Activated naive CD4-positive, alpha-beta T cell treated with anti-CD3 and anti-CD28 coated beads for 36 hours (primary cell): ENCODE measurements at regions of chr6 and their contacts with region 1.

Region 1: DNA sequence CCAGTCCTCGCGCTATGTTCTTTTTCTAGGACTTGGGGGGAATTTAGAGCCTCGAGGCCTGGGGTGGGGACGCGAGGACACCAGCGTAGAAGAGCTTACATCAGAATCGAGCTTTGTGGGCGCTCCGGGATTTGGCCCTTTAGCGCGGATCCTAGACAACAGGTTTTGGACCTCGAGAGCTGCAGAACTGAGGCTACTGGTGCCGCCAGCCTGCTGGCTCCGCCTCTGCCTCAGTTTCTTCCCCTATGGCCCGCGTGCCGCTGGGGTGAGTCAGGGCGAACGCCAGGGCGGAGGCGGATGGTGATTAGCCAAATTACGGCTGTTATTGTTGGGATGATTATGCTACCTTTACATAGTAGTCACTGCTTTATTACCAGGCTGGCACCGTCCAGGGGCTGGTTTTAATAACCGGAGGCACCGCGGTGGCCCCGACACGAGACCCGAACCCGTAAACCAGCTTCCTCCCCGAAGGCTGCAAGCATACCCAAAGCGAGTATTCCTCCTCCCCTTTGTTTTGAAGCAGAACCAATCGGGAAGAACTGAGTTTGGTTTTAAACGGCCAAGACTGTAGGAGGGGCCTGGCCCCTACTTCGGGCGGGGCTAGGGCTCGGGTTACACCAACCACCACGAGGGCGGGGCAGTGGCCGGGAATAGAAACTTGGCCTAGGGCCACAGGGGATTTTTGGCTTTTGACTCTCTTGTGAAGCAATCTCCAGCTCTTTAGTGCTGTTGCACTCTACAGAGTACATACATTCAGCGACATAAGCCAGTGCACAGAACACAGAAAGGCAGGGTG is 639 bp upstream of the GTPBP2 start:
- DNase-seq: peak; percentile 98
- H3K4me3 Mint-ChIP-seq: peak overlapping the region; percentile 98
- H3K27ac Mint-ChIP-seq: peak overlapping the region; percentile 99
- H3K4me1 Mint-ChIP-seq: peaks cover 33% of the 10 kb centered on the region
- H3K27me3 Mint-ChIP-seq: no peaks in the 10 kb centered on the region

Region 2: DNA sequence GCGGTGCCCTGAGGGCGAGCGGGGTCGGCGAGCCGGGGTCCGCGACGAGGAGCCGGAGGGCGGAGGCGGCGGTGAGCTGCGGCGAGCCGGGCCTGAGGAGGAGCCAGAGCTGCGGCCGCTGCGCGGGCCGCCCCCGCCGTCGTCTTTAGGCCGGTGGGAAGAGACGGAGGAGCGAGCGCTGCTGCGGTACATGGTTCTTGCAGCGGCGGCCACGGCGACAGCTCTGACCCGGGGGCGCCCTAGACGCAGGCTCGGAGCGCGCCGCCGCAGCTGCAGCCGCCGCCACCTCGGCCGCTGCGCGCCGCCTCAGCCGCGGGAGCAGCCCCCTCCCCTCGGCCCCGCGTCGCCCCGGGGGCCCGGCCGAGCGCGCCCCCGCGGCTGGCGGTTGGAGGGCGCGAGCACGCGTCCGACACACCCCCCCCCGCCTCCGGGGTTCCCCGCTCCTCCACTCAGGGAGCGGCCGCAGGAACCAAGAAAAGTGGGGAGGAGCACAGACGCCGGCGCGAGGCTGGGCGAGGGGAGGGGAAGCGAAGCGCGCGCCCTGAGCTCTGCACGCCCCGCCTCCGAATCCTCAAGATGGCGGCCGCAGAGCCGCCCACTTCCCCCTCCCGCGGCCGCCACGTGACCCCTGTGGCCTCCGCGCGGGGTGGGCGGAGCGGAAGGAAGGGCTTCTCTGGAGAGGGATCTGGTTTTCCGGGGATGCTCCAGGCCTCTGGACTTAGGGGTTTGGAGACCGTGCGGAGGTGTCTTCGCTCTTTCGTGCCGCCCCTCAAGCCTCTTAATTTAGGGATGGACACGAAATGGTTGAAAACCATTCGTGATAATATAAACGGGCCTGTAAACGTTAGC is 260.3 kb before region 1 on chr6 and contains the start of gene ZNF318:
- CTCF ChIA-PET with region 1: no interaction called
- intact Hi-C with region 1: loop called (anchors 5 kb)
- DNase-seq: peak; percentile 95
- H3K4me3 Mint-ChIP-seq: peak within 1 kb of the TSS; percentile 87
- H3K27ac Mint-ChIP-seq: peak within 1 kb of the TSS; percentile 90
- H3K4me1 Mint-ChIP-seq: peaks cover 36% of the 10 kb centered on the region
- H3K27me3 Mint-ChIP-seq: no peaks in the 10 kb centered on the region
- total RNA-seq, gene ZNF318: 9.3 to 9.9 TPM

Region 3: DNA sequence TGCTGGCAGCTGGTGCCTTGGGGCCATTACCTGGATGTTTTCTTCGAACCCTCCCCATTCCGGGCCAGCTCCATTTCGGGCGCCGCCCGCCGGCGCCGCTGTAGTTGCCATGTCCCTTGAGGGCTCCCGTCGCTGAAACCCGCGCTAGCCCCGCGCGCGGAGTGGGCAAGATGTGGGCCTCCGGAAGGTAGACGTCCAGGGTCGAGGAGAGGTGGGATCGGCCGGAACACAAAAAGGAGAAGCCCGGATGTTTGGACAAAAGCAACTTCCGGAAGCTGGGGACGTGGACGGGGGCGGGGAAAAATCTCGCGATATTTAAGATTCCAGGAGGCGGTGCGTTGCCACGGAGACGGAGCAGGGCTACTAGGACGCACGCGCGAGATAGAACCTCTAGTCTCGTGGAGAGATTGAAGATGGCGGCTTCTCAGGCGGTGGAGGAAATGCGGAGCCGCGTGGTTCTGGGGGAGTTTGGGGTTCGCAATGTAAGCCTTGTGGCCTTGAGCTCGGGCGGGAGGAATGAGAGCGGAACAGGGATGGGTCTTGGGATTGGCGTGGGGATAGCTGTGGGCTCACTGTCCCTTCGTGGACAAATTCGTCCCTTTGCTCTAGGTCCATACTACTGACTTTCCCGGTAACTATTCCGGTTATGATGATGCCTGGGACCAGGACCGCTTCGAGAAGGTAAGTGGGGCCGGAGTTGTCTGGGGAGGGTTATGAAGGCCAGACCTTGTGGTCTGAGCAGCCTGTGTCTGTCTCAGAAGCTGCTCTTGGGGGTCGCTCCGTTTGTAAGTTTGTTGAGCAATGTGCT is 112.8 kb before region 1 on chr6 and contains the starts of genes POLR1C and YIPF3:
- CTCF ChIA-PET with region 1: no interaction called
- intact Hi-C with region 1: loop called (anchors 1 kb)
- DNase-seq: peak; percentile 99
- H3K4me3 Mint-ChIP-seq: no peak within 1 kb of the TSS
- H3K27ac Mint-ChIP-seq: no peak within 1 kb of the TSS
- H3K4me1 Mint-ChIP-seq: peaks cover 28% of the 10 kb centered on the region
- H3K27me3 Mint-ChIP-seq: no peaks in the 10 kb centered on the region
- total RNA-seq, gene POLR1C: 47.5 to 50.1 TPM
- total RNA-seq, gene YIPF3: 26.2 to 26.5 TPM

Region 4: GRCh38 chr6:43575772-43576551 is 53.7 kb before region 1 on chr6 and contains the starts of genes POLH and XPO5:
- CTCF ChIA-PET with region 1: no interaction called
- intact Hi-C with region 1: loop called (anchors 1 kb)
- DNase-seq: peak; percentile 92
- H3K4me3 Mint-ChIP-seq: peak within 1 kb of the TSS; percentile 93
- H3K27ac Mint-ChIP-seq: peak within 1 kb of the TSS; percentile 87
- H3K4me1 Mint-ChIP-seq: peaks cover 48% of the 10 kb centered on the region
- H3K27me3 Mint-ChIP-seq: no peaks in the 10 kb centered on the region
- total RNA-seq, gene POLH: 63.3 to 68.6 TPM
- total RNA-seq, gene XPO5: 74.9 to 93.2 TPM

Region 5: GRCh38 chr6:43708860-43709653 is 79.4 kb after region 1 on chr6:
- CTCF ChIA-PET with region 1: no interaction called
- intact Hi-C with region 1: no loop called
- DNase-seq: no peak
- H3K4me3 Mint-ChIP-seq: no peak overlapping the region
- H3K27ac Mint-ChIP-seq: no peak overlapping the region
- H3K4me1 Mint-ChIP-seq: peaks cover 3% of the 10 kb centered on the region
- H3K27me3 Mint-ChIP-seq: peaks cover 10% of the 10 kb centered on the region

Region 6: DNA sequence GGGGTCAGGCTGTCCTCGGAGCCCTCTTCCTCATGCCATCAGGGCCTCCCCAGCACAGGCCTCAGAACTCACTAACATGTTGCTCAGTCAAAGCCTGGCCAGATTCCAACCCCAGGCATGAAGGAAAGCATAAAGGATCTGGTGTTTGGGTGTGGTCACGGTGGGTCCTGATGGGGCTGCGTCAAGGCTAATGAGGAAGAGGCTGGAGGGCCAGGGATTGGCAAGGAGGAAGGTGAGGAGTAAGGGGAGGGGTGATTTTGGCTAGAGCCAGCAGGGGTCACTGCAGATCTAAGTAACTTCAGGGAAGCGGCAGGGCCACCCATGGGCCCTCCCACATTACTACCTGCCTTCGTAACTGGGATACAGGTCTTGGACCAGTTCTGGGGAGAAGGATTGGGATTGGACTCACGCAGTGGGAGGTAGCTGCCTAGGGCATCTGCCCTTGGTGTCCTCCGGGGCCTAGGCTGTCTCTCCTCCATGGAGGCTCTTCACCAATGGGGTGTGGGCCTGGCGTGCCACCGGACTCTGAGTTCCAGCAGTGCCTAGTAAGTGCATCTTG is 94.1 kb after region 1 on chr6:
- CTCF ChIA-PET with region 1: no interaction called
- intact Hi-C with region 1: loop called (anchors 1 kb)
- DNase-seq: peak; percentile 90
- H3K4me3 Mint-ChIP-seq: peak overlapping the region; percentile 72
- H3K27ac Mint-ChIP-seq: no peak overlapping the region
- H3K4me1 Mint-ChIP-seq: peaks cover 23% of the 10 kb centered on the region
- H3K27me3 Mint-ChIP-seq: no peaks in the 10 kb centered on the region

Region 7: DNA sequence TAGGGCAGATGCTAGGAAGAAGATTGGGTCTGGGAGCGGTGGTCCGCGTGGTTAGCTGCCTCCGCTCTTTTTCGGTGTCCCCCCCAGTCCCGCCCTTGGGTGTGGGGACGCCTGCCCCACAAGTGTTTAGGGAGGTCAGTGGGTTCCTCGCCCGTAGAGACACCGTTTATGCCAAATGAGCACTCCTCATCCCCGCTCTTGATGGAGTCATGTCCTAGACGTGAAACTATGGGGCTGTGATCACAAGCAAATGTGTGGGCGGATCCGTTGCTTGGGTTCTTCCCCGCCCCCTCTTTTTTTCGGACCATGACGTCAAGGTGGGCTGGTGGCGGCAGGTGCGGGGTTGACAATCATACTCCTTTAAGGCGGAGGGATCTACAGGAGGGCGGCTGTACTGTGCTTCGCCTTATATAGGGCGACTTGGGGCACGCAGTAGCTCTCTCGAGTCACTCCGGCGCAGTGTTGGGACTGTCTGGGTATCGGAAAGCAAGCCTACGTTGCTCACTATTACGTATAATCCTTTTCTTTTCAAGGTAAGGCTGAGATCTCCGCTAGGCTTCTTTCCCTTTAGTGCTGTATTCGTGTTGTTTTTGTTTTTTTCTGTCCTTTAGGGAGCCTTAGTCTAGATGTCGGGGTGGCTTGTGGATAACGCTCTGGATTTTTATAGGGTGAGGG is 617.1 kb after region 1 on chr6 and contains the start of gene HSP90AB1:
- CTCF ChIA-PET with region 1: no interaction called
- intact Hi-C with region 1: loop called (anchors 1 kb)
- DNase-seq: peak; percentile 99
- H3K4me3 Mint-ChIP-seq: peak within 1 kb of the TSS; percentile 95
- H3K27ac Mint-ChIP-seq: peak within 1 kb of the TSS; percentile 97
- H3K4me1 Mint-ChIP-seq: peaks cover 46% of the 10 kb centered on the region
- H3K27me3 Mint-ChIP-seq: peaks cover 4% of the 10 kb centered on the region
- total RNA-seq, gene HSP90AB1: 1,951 to 2,044 TPM